ENCODE measurements at regions of chr2 and their contacts with region 1.

Region 1: DNA sequence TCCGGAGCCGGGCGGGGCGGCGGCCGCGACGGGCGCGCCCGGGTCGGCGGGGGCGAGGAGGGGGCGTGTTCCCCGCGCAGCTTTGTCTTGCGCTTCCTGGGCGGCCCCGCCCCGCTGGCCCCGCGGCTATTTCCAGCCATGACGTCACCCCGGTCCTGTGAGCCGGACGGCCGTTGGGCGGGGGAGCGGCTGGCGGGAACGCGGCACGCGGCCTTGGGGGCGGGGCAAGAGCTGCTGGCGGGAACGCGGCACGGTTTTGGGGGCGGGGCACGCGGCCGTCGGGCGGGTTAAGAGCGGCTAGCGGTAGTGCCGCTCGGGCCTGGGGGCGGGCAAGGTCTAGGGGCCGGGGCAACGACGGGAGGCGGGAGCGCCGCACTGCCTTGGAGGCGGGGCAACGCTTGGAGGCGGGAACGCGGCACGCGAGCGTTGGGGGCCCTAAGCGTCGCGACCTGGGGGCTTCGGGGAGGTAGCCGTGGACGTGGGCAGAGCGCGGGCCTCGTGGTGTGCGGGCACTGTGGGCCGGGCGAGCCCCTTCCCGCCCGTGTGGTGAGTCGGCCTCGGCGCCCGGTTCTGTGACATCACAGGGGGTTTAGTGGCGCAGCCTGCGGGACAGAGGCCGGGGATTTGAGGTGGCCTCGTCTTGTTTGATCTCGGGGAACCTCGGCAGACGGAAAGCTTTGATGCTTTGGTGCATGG is 704 bp downstream of the KLF11 start:
- H3K4me3 ChIP-seq: peak overlapping the region; percentile 62
- H3K27ac ChIP-seq: peak overlapping the region; percentile 96
- H3K4me1 ChIP-seq: peaks cover 2% of the 10 kb centered on the region
- CTCF ChIP-seq: no peak

Region 2: DNA sequence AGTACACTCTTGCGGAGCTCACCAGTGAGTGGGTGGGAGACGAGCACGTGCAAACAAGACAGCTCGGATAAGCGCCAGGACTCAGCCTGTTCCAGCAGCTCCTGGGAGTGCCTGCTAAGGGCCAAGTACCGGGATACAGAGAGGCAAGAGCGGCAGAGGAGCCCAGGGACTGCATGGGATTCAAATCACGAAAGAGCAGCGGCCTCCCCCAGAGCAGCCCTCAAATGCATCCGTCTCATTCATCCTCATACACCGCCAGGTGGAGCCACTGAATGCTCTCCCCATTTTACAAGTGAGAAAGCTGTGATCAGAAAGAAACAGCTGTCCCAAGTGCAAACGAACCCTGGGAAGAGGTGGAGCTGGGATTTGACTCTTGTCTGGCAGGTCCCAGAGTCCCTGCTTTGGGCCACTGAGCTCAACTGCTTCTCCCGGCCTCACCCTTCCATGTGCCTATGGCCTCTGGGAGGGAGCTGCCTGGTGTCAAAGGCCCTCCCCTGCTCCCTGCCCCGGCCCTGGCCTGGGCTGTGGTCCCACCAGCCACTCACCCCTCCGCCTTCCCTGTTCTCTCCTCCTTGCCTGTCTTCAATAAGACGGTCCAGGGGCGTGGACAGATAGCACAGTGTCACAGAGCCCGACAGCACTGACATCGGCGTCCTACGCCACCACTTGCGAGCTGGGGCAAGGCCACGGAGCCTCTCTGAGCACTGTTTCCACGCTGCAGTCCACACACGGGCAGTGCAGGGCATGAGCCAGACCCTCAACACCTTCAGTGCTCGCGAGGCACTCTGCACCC is 273.6 kb before region 1 on chr2:
- CTCF ChIA-PET with region 1: interaction called, 12 read pairs
- POLR2A ChIA-PET with region 1: no interaction called
- H3K4me3 ChIP-seq: no peak overlapping the region
- H3K27ac ChIP-seq: no peak overlapping the region
- H3K4me1 ChIP-seq: no peaks in the 10 kb centered on the region
- CTCF ChIP-seq: 0 out of 2 replicates have a peak, but pooled peaks have one; percentile 39

Region 3: GRCh38 chr2:9799665-9800632 is 244.1 kb before region 1 on chr2:
- CTCF ChIA-PET with region 1: interaction called, 60 read pairs
- POLR2A ChIA-PET with region 1: no interaction called
- H3K4me3 ChIP-seq: no peak overlapping the region
- H3K27ac ChIP-seq: no peak overlapping the region
- H3K4me1 ChIP-seq: peaks cover 3% of the 10 kb centered on the region; the same call in 1 of the 2 replicates
- CTCF ChIP-seq: peak; percentile 98

Region 4: GRCh38 chr2:9813312-9814133 is 230.5 kb before region 1 on chr2:
- CTCF ChIA-PET with region 1: interaction called, 53 read pairs
- POLR2A ChIA-PET with region 1: interaction called, 3 read pairs
- H3K4me3 ChIP-seq: no peak overlapping the region
- H3K27ac ChIP-seq: no peak overlapping the region
- H3K4me1 ChIP-seq: no peaks in the 10 kb centered on the region
- CTCF ChIP-seq: peak; percentile 86

Region 5: GRCh38 chr2:9984217-9984739 is 59.8 kb before region 1 on chr2:
- CTCF ChIA-PET with region 1: interaction called, 66 read pairs
- POLR2A ChIA-PET with region 1: interaction called, 3 read pairs
- H3K4me3 ChIP-seq: no peak overlapping the region
- H3K27ac ChIP-seq: no peak overlapping the region
- H3K4me1 ChIP-seq: peaks cover 3% of the 10 kb centered on the region; the same call in 1 of the 2 replicates
- CTCF ChIP-seq: peak; percentile 16; the same call in 1 of the 2 replicates

Region 6: DNA sequence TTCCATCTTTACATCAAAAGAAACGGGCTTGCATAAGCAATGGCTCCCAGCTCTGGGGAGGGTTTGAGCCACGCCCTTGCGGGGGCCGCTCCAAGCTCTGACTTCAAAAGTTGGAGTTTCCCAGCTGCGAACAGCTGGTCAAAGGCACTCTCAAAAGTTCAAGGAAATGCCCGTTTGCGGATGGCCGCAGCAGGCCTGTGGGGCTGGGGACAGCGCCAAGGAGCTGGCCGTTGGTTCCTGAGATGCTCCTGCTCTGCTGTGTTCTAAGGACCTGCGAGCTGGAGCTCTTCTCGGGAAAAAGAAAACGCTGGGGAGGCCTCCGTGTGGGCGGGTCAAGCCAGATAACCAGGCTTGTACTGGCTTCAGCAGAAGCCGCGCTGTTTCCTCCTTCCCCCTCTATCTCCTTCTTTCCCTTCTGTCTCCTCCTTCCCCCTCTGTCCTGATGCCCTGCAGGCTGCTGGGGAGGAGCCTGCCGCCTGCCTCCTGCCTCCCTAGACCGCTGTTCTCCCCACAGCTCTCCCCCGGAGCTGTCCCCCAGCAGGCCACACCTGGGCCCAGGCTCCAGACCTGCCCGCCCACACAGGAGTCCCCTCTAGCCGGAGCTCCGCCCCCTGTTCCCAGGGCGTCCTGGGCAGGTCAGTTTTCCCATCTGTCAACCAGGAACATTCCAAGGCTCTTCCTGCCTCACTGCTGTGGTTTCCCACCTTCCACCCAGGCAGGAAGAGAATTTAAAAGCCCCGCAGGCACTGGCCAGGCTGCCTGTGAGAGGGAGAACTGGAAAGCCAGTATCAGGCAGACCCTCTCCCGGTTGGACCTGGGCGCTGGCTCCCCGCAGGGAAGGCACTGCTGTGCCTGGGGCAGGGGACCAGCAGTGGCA is 13.4 kb after region 1 on chr2:
- CTCF ChIA-PET with region 1: interaction called, 11 read pairs
- POLR2A ChIA-PET with region 1: interaction called, 17 read pairs
- H3K4me3 ChIP-seq: peak overlapping the region; percentile 36
- H3K27ac ChIP-seq: peak overlapping the region; percentile 35; the same call in 1 of the 2 replicates
- H3K4me1 ChIP-seq: no peaks in the 10 kb centered on the region; the same call in 1 of the 2 replicates
- CTCF ChIP-seq: no peak

Region 7: DNA sequence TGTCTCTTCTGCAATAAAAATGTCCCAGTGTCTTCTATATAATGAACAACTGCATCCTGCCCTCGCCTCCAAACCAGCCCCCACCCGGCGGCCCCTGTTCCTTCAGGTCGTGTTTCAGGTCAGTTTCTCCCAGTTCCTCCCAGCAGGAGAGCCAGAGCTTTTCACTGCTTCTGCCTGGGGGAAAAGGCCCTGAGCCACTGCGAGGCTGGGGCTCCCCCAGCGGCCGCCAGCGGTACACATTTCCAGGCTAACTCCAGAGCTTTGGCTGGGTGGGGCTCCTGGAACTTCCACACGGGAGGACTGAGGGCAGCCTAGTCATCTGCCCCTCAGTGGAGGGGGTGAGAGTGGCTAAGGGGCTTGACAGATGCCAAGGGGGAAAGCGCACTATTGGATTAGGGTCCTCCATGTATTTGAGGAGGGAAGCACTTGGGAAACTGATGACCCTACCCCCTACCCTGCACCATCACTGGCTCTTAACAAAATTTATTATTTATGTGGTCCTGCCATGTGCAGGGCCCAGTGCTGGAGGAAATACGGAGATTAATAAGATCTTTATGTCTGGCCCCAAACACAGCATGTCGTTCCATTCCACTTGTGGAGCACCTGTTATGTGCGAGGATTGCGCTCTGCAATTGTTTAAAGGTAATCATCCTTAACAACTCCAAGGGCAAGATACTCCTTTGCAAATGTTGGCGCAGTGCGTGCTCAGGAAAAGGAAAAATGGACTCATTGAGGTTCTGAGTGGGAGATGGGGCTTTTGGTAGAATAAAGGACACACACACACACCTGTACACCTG is 53.5 kb after region 1 on chr2:
- CTCF ChIA-PET with region 1: interaction called, 14 read pairs
- POLR2A ChIA-PET with region 1: no interaction called
- H3K4me3 ChIP-seq: no peak overlapping the region
- H3K27ac ChIP-seq: no peak overlapping the region
- H3K4me1 ChIP-seq: peaks cover 2% of the 10 kb centered on the region; the same call in 1 of the 2 replicates
- CTCF ChIP-seq: peak; percentile 72

Measured in HEK293 (cell line).